BJ (cell line): ENCODE measurements at regions of chr10 and their contacts with region 1.

Region 1: DNA sequence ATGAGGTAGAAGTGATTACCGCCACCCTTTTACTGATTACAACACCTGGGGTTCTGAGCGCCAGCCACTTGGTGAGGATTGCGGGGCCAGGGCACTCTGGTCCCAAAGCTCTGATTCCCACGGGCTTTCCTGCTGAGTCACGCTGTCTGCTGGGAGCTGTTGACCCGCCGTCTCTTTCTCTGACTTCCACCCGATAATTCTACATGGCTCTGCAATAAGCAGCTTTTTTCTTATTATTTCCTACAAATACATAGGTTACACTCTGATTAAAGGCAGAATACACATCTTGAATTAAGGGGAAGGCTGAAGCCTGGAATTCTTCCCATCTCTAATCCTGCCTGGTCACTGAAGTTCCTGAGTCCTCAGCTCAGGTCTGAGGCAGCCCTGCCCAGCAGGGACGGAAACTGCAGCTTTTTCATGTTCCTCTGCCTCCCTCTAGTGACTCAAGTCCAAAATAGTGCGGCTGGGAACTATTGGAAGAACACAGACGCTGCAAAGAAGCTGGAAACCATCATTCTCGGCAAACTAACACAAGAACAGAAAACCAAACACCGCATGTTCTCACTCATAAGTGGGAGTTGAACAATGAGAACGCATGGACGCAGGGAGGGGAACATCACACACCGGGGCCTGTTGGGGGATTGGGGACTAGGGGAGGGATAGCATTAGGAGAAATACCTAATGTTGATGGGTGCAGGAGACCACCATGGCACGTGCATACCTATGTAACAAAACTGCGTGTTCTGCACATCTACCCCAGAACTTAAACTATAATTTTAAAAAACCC is 178.3 kb downstream of the PRKCQ start:
- DNase-seq: peak; percentile 44
- H3K4me3 ChIP-seq: peak overlapping the region; percentile 24; the same call in 1 of the 2 replicates
- H3K27me3 ChIP-seq: peaks cover 2% of the 10 kb centered on the region; the same call in 1 of the 2 replicates
- CTCF ChIP-seq: peak; percentile 74

Region 2: GRCh38 chr10:6014241-6014761 is 387.5 kb before region 1 on chr10:
- CTCF ChIA-PET with region 1: interaction called, 16 read pairs
- POLR2A ChIA-PET with region 1: no interaction called
- DNase-seq: no peak
- H3K4me3 ChIP-seq: no peak overlapping the region
- H3K27me3 ChIP-seq: no peaks in the 10 kb centered on the region; the same call in 1 of the 2 replicates
- CTCF ChIP-seq: peak; percentile 79

Region 3: GRCh38 chr10:6101181-6101580 is 300.6 kb before region 1 on chr10:
- CTCF ChIA-PET with region 1: interaction called, 29 read pairs
- POLR2A ChIA-PET with region 1: no interaction called
- DNase-seq: no peak
- H3K4me3 ChIP-seq: no peak overlapping the region
- H3K27me3 ChIP-seq: no peaks in the 10 kb centered on the region
- CTCF ChIP-seq: no peak

Region 4: GRCh38 chr10:6136215-6137201 is 265.2 kb before region 1 on chr10:
- CTCF ChIA-PET with region 1: interaction called, 14 read pairs
- POLR2A ChIA-PET with region 1: no interaction called
- DNase-seq: peak; percentile 47
- H3K4me3 ChIP-seq: no peak overlapping the region; the same call in 1 of the 2 replicates
- H3K27me3 ChIP-seq: no peaks in the 10 kb centered on the region; the same call in 1 of the 2 replicates
- CTCF ChIP-seq: peak; percentile 12; the same call in 1 of the 2 replicates

Region 5: DNA sequence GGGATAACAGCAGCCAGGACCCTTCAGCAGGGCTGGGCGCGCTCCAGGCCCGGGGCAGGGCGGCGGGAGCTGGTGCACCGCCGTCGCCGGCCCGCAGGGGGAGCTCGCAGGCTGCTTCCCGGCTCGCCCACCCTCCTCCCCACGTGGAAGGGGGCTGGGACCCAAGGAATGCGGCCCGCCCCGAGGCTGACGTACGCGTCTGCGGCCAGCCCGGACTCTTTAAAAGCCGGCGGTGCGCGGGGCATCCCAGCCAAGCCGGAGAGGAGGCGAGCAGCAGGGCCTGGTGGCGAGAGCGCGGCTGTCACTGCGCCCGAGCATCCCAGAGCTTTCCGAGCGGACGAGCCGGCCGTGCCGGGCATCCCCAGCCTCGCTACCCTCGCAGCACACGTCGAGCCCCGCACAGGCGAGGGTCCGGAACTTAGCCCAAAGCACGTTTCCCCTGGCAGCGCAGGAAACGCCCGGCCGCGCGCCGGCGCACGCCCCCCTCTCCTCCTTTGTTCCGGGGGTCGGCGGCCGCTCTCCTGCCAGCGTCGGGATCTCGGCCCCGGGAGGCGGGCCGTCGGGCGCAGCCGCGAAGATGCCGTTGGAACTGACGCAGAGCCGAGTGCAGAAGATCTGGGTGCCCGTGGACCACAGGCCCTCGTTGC is 198.9 kb before region 1 on chr10 and contains the start of gene PFKFB3:
- CTCF ChIA-PET with region 1: interaction called, 228 read pairs
- POLR2A ChIA-PET with region 1: interaction called, 13 read pairs
- DNase-seq: no peak
- H3K4me3 ChIP-seq: peak within 1 kb of the TSS; percentile 95
- H3K27me3 ChIP-seq: no peaks in the 10 kb centered on the region
- CTCF ChIP-seq: peak; percentile 70
- polyA plus RNA-seq, gene PFKFB3: 15.6 and 30.7 TPM in 2 replicates

Region 6: GRCh38 chr10:6973899-6974298 is 572.1 kb after region 1 on chr10:
- CTCF ChIA-PET with region 1: no interaction called
- POLR2A ChIA-PET with region 1: no interaction called
- DNase-seq: no peak
- H3K4me3 ChIP-seq: no peak overlapping the region
- H3K27me3 ChIP-seq: no peaks in the 10 kb centered on the region
- CTCF ChIP-seq: no peak